T-cell (primary cell): ENCODE measurements at regions of chr5 and their contacts with region 1.

Region 1: DNA sequence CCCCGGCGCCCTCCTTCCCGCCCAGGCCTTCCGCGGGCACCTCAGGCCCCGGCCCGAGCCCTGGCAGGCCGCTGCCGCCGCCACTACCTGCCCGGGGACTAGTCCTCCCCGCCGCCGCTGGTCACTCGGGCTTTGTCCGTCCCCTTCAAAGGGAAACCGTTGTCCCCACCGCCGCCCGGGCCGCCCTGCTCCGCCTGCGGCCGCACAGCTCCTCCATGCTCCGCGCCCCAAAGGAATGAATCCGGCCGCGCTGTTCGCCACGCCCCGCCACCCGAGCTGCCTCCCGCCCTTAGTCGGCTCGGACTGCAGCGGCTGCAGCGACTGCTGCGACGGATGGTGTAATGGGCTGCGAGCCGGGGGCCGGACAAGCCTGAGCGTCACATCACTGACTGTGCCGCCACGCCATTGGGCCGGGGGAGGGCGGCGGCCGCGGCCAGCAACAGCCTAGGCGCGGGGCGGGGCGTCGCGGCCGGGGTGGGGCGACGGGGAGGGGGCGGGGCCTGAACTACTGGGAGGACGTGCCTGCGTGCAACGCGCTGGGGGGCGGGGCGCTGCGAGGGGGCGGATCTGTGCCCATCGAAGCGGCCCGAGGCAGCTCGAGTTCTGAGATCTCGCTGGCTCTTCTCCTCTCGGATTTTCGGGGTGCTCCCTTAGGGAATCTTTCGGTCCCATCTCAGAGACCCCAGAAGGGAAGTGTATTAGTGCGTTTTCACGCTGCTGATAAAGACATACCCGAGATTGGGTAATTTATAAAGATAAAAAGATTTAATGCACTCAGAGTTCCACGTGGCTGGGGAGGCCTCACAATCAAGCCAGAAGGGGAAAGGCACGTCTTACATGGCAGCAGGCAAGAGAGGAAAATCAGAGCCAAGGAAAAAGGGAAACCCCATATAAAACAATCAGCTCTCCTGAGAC is at the start of gene FEM1C:
- DNase-seq: peak; percentile 87 to 99 (median 96)
- ATAC-seq: peak; percentile 85 to 94 (median 90)
- H3K4me3 ChIP-seq: peak within 1 kb of the TSS; percentile 73 to 76
- H3K4me3 Mint-ChIP-seq: peak within 1 kb of the TSS; percentile 84 to 98 (median 97)
- H3K27ac ChIP-seq: peak within 1 kb of the TSS; percentile 87
- H3K27ac Mint-ChIP-seq: peak within 1 kb of the TSS; percentile 98
- H3K4me1 ChIP-seq: peaks cover 12 to 34% of the 10 kb centered on the region in 2 experiments
- H3K4me1 Mint-ChIP-seq: peaks cover 44 to 49% (median 47%) of the 10 kb centered on the region in 3 donors
- H3K27me3 ChIP-seq: no peaks in the 10 kb centered on the region
- H3K27me3 Mint-ChIP-seq: no peaks in the 10 kb centered on the region
- total RNA-seq, gene FEM1C: 14.2 to 30.3 (median 15.3) TPM

Region 2: DNA sequence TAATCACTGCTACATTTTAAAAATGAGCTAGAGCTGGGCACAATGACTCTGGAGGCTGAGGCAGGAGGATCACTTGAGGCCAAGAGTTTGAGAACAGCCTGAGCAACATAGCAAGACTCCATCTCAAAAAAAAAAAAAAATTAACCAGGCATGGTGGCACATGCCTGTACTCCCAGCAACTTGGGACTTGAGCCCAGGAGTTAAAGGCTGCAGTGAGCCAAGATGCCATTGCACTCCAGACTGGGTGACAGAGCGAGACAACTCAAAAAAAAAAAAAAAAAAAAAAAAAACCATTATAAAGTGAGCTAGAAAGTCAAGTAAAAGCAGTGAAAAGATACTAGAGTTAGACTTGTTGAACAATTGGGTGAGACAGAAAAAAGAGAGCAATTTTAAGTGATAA is 28.3 kb before region 1 on chr5:
- CTCF ChIA-PET with region 1: no interaction called
- POLR2A ChIA-PET with region 1: interaction called, 4 to 11 read pairs
- DNase-seq: no peak
- ATAC-seq: no peak
- H3K4me3 ChIP-seq: no peak overlapping the region
- H3K4me3 Mint-ChIP-seq: no peak overlapping the region
- H3K27ac ChIP-seq: no peak overlapping the region
- H3K27ac Mint-ChIP-seq: no peak overlapping the region
- H3K4me1 ChIP-seq: no peaks in the 10 kb centered on the region
- H3K4me1 Mint-ChIP-seq: peaks cover 0 to 7% (median 6%) of the 10 kb centered on the region in 3 donors
- H3K27me3 ChIP-seq: no peaks in the 10 kb centered on the region
- H3K27me3 Mint-ChIP-seq: no peaks in the 10 kb centered on the region

Region 3: GRCh38 chr5:115530426-115530825 is 14.3 kb before region 1 on chr5:
- CTCF ChIA-PET with region 1: interaction called in 1 of 2 experiments, 4 read pairs
- POLR2A ChIA-PET with region 1: interaction called, 16 to 21 read pairs
- DNase-seq: no peak
- ATAC-seq: no peak
- H3K4me3 ChIP-seq: no peak overlapping the region
- H3K4me3 Mint-ChIP-seq: no peak overlapping the region
- H3K27ac ChIP-seq: no peak overlapping the region
- H3K27ac Mint-ChIP-seq: no peak overlapping the region
- H3K4me1 ChIP-seq: peaks cover 0 to 7% of the 10 kb centered on the region in 2 experiments
- H3K4me1 Mint-ChIP-seq: peaks cover 63 to 79% (median 76%) of the 10 kb centered on the region in 3 donors
- H3K27me3 ChIP-seq: no peaks in the 10 kb centered on the region
- H3K27me3 Mint-ChIP-seq: no peaks in the 10 kb centered on the region

Region 4: DNA sequence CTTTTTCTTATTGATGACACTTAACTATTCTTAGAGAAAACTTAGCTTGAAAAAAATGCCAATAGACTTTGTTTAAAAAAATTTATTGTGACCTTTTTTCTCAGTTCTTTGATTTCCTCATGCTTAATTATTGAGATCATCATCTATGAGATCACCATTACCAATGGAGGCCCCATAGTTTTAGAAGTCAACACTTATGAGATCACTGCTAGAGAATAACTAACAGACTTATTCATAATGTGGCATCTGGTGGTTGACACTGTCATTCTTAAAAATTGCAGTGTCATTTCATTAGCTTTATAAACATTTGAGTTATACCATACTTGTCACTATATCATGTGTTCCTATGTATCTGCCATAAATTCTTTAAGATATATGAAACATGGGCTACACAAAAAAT is 14.8 kb after region 1 on chr5:
- CTCF ChIA-PET with region 1: interaction called in 1 of 2 experiments, 12 read pairs
- POLR2A ChIA-PET with region 1: interaction called in 1 of 2 experiments, 4 read pairs
- DNase-seq: no peak
- ATAC-seq: no peak
- H3K4me3 ChIP-seq: no peak overlapping the region
- H3K4me3 Mint-ChIP-seq: no peak overlapping the region
- H3K27ac ChIP-seq: no peak overlapping the region
- H3K27ac Mint-ChIP-seq: no peak overlapping the region
- H3K4me1 ChIP-seq: no peaks in the 10 kb centered on the region
- H3K4me1 Mint-ChIP-seq: peaks cover 0 to 12% (median 0%) of the 10 kb centered on the region in 3 donors
- H3K27me3 ChIP-seq: no peaks in the 10 kb centered on the region
- H3K27me3 Mint-ChIP-seq: peaks cover 3 to 17% of the 10 kb centered on the region in 2 donors